ENCODE measurements at regions of chr17 and their contacts with region 1.

Region 1: GRCh38 chr17:76523084-76524037 is 14.1 kb downstream of the CYGB start:
- DNase-seq: peak; percentile 72 to 87 (median 76)
- H3K4me3 ChIP-seq: peak overlapping the region; percentile 44
- H3K4me3 Mint-ChIP-seq: peak overlapping the region in 6 of 7 donors; percentile 41 to 70 (median 60)
- H3K27ac ChIP-seq: no peak overlapping the region
- H3K27ac Mint-ChIP-seq: peak overlapping the region; percentile 79 to 95 (median 86)
- H3K4me1 ChIP-seq: peaks cover 19% of the 10 kb centered on the region
- H3K4me1 Mint-ChIP-seq: peaks cover 21 to 38% (median 27%) of the 10 kb centered on the region in 3 donors
- H3K27me3 ChIP-seq: no peaks in the 10 kb centered on the region
- H3K27me3 Mint-ChIP-seq: peaks cover 0 to 1% of the 10 kb centered on the region in 2 donors

Region 2: GRCh38 chr17:76467366-76467765 is 56.0 kb before region 1 on chr17 and contains the start of gene AANAT:
- CTCF ChIA-PET with region 1: interaction called, 10 read pairs
- POLR2A ChIA-PET with region 1: no interaction called
- DNase-seq: no peak
- H3K4me3 ChIP-seq: no peak within 1 kb of the TSS
- H3K4me3 Mint-ChIP-seq: no peak within 1 kb of the TSS
- H3K27ac ChIP-seq: no peak within 1 kb of the TSS
- H3K27ac Mint-ChIP-seq: peak within 1 kb of the TSS in 3 of 8 donors; percentile 23 to 36 (median 32)
- H3K4me1 ChIP-seq: no peaks in the 10 kb centered on the region
- H3K4me1 Mint-ChIP-seq: peaks cover 0 to 5% (median 3%) of the 10 kb centered on the region in 3 donors
- H3K27me3 ChIP-seq: no peaks in the 10 kb centered on the region
- H3K27me3 Mint-ChIP-seq: no peaks in the 10 kb centered on the region
- total RNA-seq, gene AANAT: not detected

Region 3: GRCh38 chr17:76540381-76541300 is 17.3 kb after region 1 on chr17:
- CTCF ChIA-PET with region 1: interaction called, 97 read pairs
- POLR2A ChIA-PET with region 1: interaction called, 7 read pairs
- DNase-seq: no peak
- H3K4me3 ChIP-seq: no peak overlapping the region
- H3K4me3 Mint-ChIP-seq: no peak overlapping the region
- H3K27ac ChIP-seq: no peak overlapping the region
- H3K27ac Mint-ChIP-seq: peak overlapping the region in 1 of 8 donors; percentile 60
- H3K4me1 ChIP-seq: no peaks in the 10 kb centered on the region
- H3K4me1 Mint-ChIP-seq: peaks cover 1 to 15% (median 6%) of the 10 kb centered on the region in 3 donors
- H3K27me3 ChIP-seq: peaks cover 22% of the 10 kb centered on the region
- H3K27me3 Mint-ChIP-seq: peaks cover 20 to 33% of the 10 kb centered on the region in 2 donors

Region 4: GRCh38 chr17:76557368-76558197 is 34.2 kb after region 1 on chr17:
- CTCF ChIA-PET with region 1: interaction called, 47 read pairs
- POLR2A ChIA-PET with region 1: interaction called, 4 read pairs
- DNase-seq: peak; percentile 85 to 96 (median 93)
- H3K4me3 ChIP-seq: peak overlapping the region; percentile 76
- H3K4me3 Mint-ChIP-seq: peak overlapping the region; percentile 97 to 99 (median 99)
- H3K27ac ChIP-seq: peak overlapping the region; percentile 91
- H3K27ac Mint-ChIP-seq: peak overlapping the region; percentile 96 to 100 (median 99)
- H3K4me1 ChIP-seq: peaks cover 49% of the 10 kb centered on the region
- H3K4me1 Mint-ChIP-seq: peaks cover 63 to 71% (median 67%) of the 10 kb centered on the region in 3 donors
- H3K27me3 ChIP-seq: no peaks in the 10 kb centered on the region
- H3K27me3 Mint-ChIP-seq: no peaks in the 10 kb centered on the region

Region 5: DNA sequence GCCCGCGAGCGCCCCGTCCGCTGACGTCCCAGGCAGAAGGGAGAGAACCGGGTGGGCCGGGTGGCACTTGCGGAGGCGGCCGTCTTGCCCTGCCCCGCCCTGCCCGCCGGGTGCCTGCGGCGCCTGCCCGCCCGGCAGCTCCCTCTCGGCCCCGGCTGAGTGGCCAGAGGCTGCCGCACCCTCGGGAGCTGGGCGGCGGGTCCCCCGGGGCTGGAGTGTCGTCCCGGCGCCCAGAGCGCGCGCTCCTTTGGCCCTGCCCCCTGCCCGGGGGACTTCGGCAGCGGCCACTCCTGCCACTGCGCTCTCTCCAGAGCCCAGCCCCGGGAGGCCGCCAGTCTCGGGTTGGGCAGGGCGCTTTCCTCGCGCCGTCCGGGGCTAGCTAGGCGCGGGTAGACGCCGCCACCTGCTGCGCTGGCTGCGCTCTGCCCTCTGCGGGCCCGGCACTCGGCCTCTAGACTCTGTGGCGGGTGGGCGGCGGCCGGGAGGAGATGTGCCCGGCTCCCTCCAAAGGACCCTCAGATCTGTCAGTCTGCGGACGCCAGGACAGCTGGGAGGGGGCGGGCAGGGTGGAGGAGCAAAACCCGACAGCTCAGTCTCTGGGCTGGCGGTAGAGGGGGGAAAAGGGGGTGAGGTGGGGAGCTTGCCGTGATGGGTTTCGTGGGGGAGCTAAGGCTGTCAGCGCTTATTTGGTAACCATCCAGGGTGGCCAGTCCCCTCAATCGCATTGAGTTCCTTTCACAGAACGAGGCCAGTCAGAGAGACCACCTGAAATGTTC is 62.6 kb after region 1 on chr17 and contains the start of gene ST6GALNAC2:
- CTCF ChIA-PET with region 1: interaction called, 22 read pairs
- POLR2A ChIA-PET with region 1: interaction called, 4 read pairs
- DNase-seq: peak; percentile 18 to 74 (median 41)
- H3K4me3 ChIP-seq: peak within 1 kb of the TSS; percentile 39
- H3K4me3 Mint-ChIP-seq: peak within 1 kb of the TSS; percentile 67 to 88 (median 75)
- H3K27ac ChIP-seq: no peak within 1 kb of the TSS
- H3K27ac Mint-ChIP-seq: peak within 1 kb of the TSS in 2 of 8 donors; percentile 43 to 87
- H3K4me1 ChIP-seq: peaks cover 10% of the 10 kb centered on the region
- H3K4me1 Mint-ChIP-seq: peaks cover 0 to 24% (median 9%) of the 10 kb centered on the region in 3 donors
- H3K27me3 ChIP-seq: peaks cover 16% of the 10 kb centered on the region
- H3K27me3 Mint-ChIP-seq: peaks cover 43 to 48% of the 10 kb centered on the region in 2 donors
- total RNA-seq, gene ST6GALNAC2: 0.83 to 1.0 TPM

Region 6: DNA sequence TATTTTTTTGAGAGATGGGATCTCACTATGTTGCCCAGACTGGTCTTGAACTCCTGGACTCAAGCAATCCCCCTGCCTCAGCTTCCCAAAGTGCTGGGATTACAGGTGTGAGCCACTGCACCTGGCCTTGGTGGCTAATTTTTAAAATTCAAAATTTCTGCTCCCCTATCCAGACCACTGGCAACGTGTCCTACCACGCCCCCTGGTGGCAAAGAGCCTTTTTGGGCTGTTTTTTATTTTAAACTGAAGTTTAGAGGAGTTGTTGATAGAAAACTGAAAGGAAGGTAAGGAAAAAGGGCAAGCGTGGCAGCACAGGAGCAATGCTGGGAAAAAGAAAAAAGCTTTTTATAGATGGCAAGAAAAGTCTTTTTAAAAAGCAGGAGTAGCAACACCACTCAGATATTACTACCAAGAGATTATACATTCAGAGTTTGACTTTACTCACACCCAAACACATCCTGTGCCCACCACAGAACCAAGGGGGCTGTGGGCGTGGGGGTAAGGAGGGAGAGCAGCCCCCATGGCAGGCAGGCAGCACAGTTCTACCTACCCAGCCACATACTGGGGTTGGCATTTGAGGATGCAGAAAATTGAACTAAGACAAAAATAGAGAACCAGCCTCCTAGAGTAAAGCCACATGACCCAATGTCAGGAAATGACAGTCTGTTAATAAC is 191.6 kb after region 1 on chr17:
- CTCF ChIA-PET with region 1: interaction called, 12 read pairs
- POLR2A ChIA-PET with region 1: no interaction called
- DNase-seq: peak; percentile 64 to 82 (median 67)
- H3K4me3 ChIP-seq: no peak overlapping the region
- H3K4me3 Mint-ChIP-seq: peak overlapping the region; percentile 24 to 75 (median 71)
- H3K27ac ChIP-seq: peak overlapping the region; percentile 57
- H3K27ac Mint-ChIP-seq: peak overlapping the region; percentile 91 to 99 (median 98)
- H3K4me1 ChIP-seq: peaks cover 37% of the 10 kb centered on the region
- H3K4me1 Mint-ChIP-seq: peaks cover 42 to 67% (median 44%) of the 10 kb centered on the region in 3 donors
- H3K27me3 ChIP-seq: no peaks in the 10 kb centered on the region
- H3K27me3 Mint-ChIP-seq: no peaks in the 10 kb centered on the region

Measured in CD8-positive, alpha-beta memory T cell (primary cell).